IMR-90 (cell line): ENCODE measurements at regions of chr15 and their contacts with region 1.

Region 1: GRCh38 chr15:80788536-80788935 is 9.4 kb downstream of the CEMIP start:
- DNase-seq: peak; percentile 92
- ATAC-seq: peak; percentile 57
- H3K4me3 ChIP-seq: no peak overlapping the region
- H3K27ac ChIP-seq: 0 out of 2 replicates have a peak overlapping the region, but pooled peaks have one; percentile 84
- H3K4me1 ChIP-seq: peaks cover 23% of the 10 kb centered on the region
- H3K27me3 ChIP-seq: no peaks in the 10 kb centered on the region
- CTCF ChIP-seq: no peak
- POLR2A ChIP-seq: no peak
- RAD21 ChIP-seq: no peak

Region 2: DNA sequence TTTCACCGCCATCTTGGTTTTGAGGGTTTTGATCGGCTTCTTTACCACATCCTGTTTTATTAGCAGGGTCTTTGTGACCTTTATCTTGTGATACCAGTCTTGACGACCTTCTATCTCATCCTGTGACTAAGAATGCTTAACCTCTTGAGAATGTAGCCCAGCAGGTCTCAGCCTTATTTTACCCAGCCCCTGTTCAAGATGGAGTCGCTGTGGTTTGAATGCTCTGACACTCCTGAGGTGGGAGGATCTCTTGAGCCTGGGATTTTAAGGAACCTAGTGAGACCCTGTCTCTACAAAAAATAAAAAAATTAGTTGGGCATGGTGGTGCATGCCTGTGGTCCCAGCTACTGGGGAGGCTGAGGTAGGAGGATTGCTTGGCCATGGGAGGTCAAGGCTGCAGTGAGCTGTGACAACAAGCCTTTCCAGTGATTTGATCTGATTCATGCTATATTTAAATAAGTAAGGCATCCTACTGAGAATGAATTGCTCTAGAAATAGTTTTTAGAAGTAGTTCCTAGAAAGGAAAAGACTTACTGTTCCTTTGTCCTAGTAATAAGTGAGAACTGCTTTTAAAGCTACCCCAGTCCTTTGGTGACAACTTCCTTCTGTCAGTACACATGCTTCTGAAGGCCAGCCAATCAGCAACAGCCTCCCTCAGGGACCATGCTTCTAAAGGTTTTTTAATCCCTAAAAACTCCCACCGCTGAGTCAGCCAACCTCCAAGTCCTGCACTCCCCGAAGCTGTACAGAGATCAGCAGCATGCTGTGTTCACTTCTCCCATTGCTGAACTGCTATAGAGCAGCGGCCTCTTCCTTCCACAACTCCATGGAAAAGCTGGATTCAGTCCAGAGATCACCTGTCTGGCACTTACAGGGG is 18.5 kb before region 1 on chr15:
- CTCF ChIA-PET with region 1: no interaction called
- POLR2A ChIA-PET with region 1: no interaction called
- dilution Hi-C with region 1: no loop called
- in situ Hi-C with region 1: no loop called
- intact Hi-C with region 1: no loop called
- DNase-seq: no peak
- ATAC-seq: no peak
- H3K4me3 ChIP-seq: no peak overlapping the region
- H3K27ac ChIP-seq: no peak overlapping the region
- H3K4me1 ChIP-seq: peaks cover 2% of the 10 kb centered on the region; the same call in 1 of the 2 replicates
- H3K27me3 ChIP-seq: no peaks in the 10 kb centered on the region
- CTCF ChIP-seq: no peak
- POLR2A ChIP-seq: no peak
- RAD21 ChIP-seq: no peak

Region 3: GRCh38 chr15:80803580-80804525 is 15.3 kb after region 1 on chr15:
- CTCF ChIA-PET with region 1: no interaction called
- POLR2A ChIA-PET with region 1: interaction called, 13 read pairs
- dilution Hi-C with region 1: no loop called
- in situ Hi-C with region 1: no loop called
- intact Hi-C with region 1: no loop called
- DNase-seq: no peak
- ATAC-seq: no peak
- H3K4me3 ChIP-seq: no peak overlapping the region
- H3K27ac ChIP-seq: no peak overlapping the region
- H3K4me1 ChIP-seq: no peaks in the 10 kb centered on the region; the same call in 1 of the 2 replicates
- H3K27me3 ChIP-seq: no peaks in the 10 kb centered on the region
- CTCF ChIP-seq: no peak
- POLR2A ChIP-seq: no peak
- RAD21 ChIP-seq: no peak